Posterior vena cava (tissue), 2 donors: ENCODE measurements at regions of chr13 and their contacts with region 1.

Region 1: GRCh38 chr13:94936633-94937032 is 224.3 kb upstream of the SOX21 start:
- DNase-seq: no peak

Region 2: DNA sequence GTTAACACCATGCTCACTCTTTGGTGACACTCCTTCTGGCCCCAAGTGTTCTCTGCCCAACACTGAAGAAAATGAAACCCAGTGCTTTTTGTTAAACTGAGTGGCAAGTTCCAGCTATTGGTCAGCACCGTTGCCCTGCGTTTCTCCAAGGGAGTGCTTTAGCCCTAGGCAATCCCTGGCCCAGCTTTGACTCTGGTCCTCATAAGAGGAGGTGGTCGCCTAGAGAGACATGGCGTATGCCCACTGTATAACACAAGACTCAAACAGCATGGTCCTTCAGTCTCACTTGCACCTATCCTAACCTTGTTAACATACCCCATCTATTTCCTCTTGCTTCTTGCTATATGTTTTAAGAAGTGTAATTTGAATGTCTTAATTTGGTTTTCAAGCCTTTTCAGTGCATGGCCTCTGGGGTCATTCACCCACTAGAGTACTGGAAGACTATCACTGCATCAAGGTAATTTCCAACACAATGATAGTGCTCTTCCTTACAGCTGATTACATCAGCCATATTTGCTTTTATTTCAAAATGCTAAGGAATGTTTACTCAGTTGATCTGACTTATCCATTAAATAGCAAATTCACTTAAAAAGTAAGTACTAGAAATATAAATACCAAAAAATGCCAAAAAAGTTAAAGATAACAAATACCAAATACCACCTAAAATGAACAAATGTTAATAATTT is 33.8 kb before region 1 on chr13:
- intact Hi-C with region 1: no loop called
- DNase-seq: no peak

Region 3: GRCh38 chr13:94921181-94921580 is 15.5 kb before region 1 on chr13:
- intact Hi-C with region 1: loop called in 1 of 2 experiments (anchors 1 kb)
- DNase-seq: no peak